ENCODE measurements at regions of chr2 and their contacts with region 1.

Region 1: DNA sequence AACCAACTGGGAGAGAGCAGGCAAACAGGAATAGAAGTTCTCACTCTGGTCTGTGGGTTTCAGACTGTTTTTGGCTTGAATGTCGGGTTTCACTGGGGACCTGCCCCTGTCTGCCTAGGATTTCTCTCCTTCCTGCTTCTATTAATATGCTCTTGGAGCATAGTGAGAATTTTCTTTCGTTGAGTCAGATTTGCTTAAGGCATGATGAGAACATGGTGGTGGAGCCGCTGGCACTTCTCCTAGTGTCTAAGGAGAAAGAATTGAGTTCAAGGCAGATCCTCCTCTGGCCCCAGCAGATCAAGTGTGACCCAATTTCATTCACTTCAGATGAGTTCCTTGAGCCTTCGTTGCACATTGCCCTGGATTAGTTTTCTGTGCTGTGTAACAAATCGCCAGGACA is 103.9 kb upstream of the HS6ST1 start:
- DNase-seq: peak in 2 of 5 donors; percentile 1 to 2
- ATAC-seq: no peak
- H3K4me3 ChIP-seq: no peak overlapping the region
- H3K27ac ChIP-seq: no peak overlapping the region
- H3K4me1 ChIP-seq: no peaks in the 10 kb centered on the region
- H3K27me3 ChIP-seq: no peaks in the 10 kb centered on the region
- CTCF ChIP-seq: no peak
- POLR2A ChIP-seq: no peak

Region 2: GRCh38 chr2:128442053-128442751 is 19.6 kb after region 1 on chr2:
- intact Hi-C with region 1: no loop called
- DNase-seq: no peak
- ATAC-seq: no peak
- H3K4me3 ChIP-seq: no peak overlapping the region
- H3K27ac ChIP-seq: peak overlapping the region in 7 of 12 donors; percentile 17 to 86 (median 47)
- H3K4me1 ChIP-seq: peaks cover 0 to 46% (median 16%) of the 10 kb centered on the region in 12 donors
- H3K27me3 ChIP-seq: no peaks in the 10 kb centered on the region
- CTCF ChIP-seq: no peak
- POLR2A ChIP-seq: no peak

Region 3: DNA sequence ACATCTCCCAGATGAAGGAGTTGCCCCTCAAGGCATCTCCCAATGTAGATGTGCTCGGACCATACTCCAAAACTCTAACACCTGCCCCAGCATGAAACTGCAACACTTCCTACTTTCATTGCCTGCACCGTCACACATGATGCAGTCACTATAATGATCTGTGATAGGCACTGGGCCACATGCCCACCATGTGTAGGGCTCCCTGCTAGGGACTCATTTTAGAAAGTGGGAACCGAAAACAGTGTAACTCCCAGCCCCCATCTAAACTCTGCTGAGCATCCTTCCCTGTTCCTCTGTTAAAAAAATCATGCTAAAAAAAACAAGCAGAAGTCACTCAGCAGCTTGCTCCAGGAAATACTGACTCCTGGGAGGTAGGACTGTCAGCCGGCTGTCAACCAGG is 1060.8 kb after region 1 on chr2:
- intact Hi-C with region 1: loop called in 1 of 10 experiments (anchors 10 kb)
- DNase-seq: peak in 2 of 5 donors; percentile 23 to 41
- ATAC-seq: peak in 1 of 4 donors; percentile 60
- H3K4me3 ChIP-seq: no peak overlapping the region
- H3K27ac ChIP-seq: no peak overlapping the region
- H3K4me1 ChIP-seq: no peaks in the 10 kb centered on the region
- H3K27me3 ChIP-seq: peaks cover 0 to 8% (median 0%) of the 10 kb centered on the region in 9 donors
- CTCF ChIP-seq: no peak
- POLR2A ChIP-seq: no peak